ENCODE measurements at regions of chr4 and their contacts with region 1.

Region 1: GRCh38 chr4:108181704-108182103 is 13.0 kb upstream of the LEF1 start:
- DNase-seq: no peak
- ATAC-seq: no peak
- H3K4me3 Mint-ChIP-seq: no peak overlapping the region
- H3K27ac Mint-ChIP-seq: no peak overlapping the region
- H3K4me1 Mint-ChIP-seq: no peaks in the 10 kb centered on the region
- H3K27me3 Mint-ChIP-seq: peaks cover under 1% of the 10 kb centered on the region
- CTCF ChIP-seq: no peak

Region 2: GRCh38 chr4:108018040-108018883 is 163.4 kb before region 1 on chr4:
- CTCF ChIA-PET with region 1: interaction called, 3 read pairs
- POLR2A ChIA-PET with region 1: no interaction called
- intact Hi-C with region 1: loop called (anchors 1 kb)
- DNase-seq: peak; percentile 45
- ATAC-seq: peak; percentile 47
- H3K4me3 Mint-ChIP-seq: no peak overlapping the region
- H3K27ac Mint-ChIP-seq: no peak overlapping the region
- H3K4me1 Mint-ChIP-seq: peaks cover 2% of the 10 kb centered on the region
- H3K27me3 Mint-ChIP-seq: no peaks in the 10 kb centered on the region
- CTCF ChIP-seq: no peak